ENCODE measurements at regions of chr1 and their contacts with region 1.

Region 1: GRCh38 chr1:168603501-168604110 is 27.2 kb downstream of the XCL1 start:
- DNase-seq: peak; percentile 78
- ATAC-seq: peak; percentile 82 to 93 (median 88)
- H3K4me3 ChIP-seq: no peak overlapping the region
- H3K27ac ChIP-seq: no peak overlapping the region
- H3K4me1 ChIP-seq: peaks cover 0 to 15% (median under 1%) of the 10 kb centered on the region in 9 donors
- H3K27me3 ChIP-seq: no peaks in the 10 kb centered on the region
- CTCF ChIP-seq: peak; percentile 65 to 93 (median 88)

Region 2: DNA sequence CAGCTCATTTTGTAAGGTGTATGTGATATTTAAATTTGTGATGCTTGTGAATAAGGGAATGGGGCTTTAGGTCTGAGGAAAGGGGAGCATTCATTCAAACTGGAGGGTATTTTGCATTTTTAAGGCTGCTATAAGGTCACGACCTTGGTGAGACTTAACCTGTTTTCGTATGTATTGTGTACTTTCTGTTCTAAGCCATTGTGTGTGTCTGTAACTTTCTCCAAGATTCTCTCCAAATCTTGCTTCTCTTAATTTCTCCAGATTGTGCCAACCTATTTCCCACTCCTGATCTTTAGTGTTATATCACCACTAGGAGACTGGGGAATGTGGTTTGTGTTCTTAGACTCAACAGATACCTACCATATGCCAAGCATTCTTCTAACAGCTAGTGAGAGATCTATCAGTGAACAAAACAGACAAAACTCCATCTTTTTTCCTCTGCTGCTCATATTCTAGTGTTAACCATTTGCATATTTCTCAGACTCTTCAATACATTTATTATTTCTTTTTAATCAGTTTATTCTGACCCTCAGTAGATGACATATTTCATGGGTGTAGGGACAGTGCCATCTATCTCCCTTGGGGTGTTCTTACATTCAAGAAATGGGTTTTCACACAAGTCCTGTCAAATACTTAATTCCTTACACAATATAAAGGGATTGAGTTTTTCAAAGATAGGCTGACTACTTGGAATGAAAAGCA is 530.3 kb after region 1 on chr1:
- intact Hi-C with region 1: loop called in 2 of 10 experiments (anchors 10 kb)
- DNase-seq: no peak
- ATAC-seq: peak in 3 of 8 donors; percentile 45 to 57 (median 52)
- H3K4me3 ChIP-seq: no peak overlapping the region
- H3K27ac ChIP-seq: peak overlapping the region in 1 of 10 donors; percentile 10
- H3K4me1 ChIP-seq: peaks cover 0 to 44% (median 11%) of the 10 kb centered on the region in 9 donors
- H3K27me3 ChIP-seq: no peaks in the 10 kb centered on the region
- CTCF ChIP-seq: peak in 6 of 9 donors; percentile 21 to 58 (median 42)

Region 3: GRCh38 chr1:169193191-169193850 is 589.7 kb after region 1 on chr1:
- intact Hi-C with region 1: loop called in 2 of 10 experiments (anchors 5 to 10 kb)
- DNase-seq: peak; percentile 12 to 34
- ATAC-seq: peak; percentile 76 to 97 (median 88)
- H3K4me3 ChIP-seq: no peak overlapping the region
- H3K27ac ChIP-seq: peak overlapping the region in 2 of 10 donors; percentile 23 to 24
- H3K4me1 ChIP-seq: peaks cover 0 to 15% (median 8%) of the 10 kb centered on the region in 9 donors
- H3K27me3 ChIP-seq: no peaks in the 10 kb centered on the region
- CTCF ChIP-seq: peak in 6 of 9 donors; percentile 16 to 58 (median 46)

Measured in heart right ventricle (tissue), 16 donors.